A549 (cell line): ENCODE measurements at regions of chr20 and their contacts with region 1.

Region 1: GRCh38 chr20:17845701-17846475 is 122.7 kb downstream of the SNX5 start:
- DNase-seq: no peak
- ATAC-seq: no peak
- H3K4me3 ChIP-seq: no peak overlapping the region
- H3K27ac ChIP-seq: no peak overlapping the region
- H3K4me1 ChIP-seq: no peaks in the 10 kb centered on the region
- CTCF ChIP-seq: no peak
- EP300 ChIP-seq: no peak
- POLR2A ChIP-seq: no peak
- RAD21 ChIP-seq: no peak

Region 2: DNA sequence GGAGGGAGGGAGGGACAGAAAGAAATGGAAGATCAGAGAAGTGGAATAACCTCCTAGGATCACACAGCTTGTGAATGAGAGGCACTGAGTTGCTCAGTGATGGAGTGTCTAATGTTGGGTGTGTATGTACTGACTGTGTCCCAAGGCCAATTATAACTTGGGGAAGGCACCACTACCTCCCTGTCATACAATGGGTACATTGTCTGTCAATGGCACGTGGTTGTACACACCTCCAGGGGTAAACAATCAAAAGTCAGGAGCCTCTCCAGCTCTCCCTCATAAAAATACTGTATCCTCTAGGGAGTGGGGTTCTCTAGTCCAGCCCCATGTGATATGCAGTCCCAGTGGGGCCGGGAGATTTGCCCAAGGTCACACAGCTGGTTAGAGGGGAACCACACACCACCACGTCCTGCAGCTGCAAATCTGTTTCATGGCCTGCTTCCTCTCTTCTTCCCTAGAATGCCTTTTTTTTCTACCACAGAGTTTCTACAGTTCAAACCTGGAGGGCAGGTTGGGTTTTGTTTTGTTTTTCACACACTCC is 10.2 kb after region 1 on chr20:
- CTCF ChIA-PET with region 1: interaction called, 10 read pairs
- POLR2A ChIA-PET with region 1: no interaction called
- DNase-seq: no peak
- ATAC-seq: no peak
- H3K4me3 ChIP-seq: no peak overlapping the region
- H3K27ac ChIP-seq: no peak overlapping the region
- H3K4me1 ChIP-seq: no peaks in the 10 kb centered on the region
- CTCF ChIP-seq: no peak
- EP300 ChIP-seq: no peak
- POLR2A ChIP-seq: no peak
- RAD21 ChIP-seq: no peak

Region 3: DNA sequence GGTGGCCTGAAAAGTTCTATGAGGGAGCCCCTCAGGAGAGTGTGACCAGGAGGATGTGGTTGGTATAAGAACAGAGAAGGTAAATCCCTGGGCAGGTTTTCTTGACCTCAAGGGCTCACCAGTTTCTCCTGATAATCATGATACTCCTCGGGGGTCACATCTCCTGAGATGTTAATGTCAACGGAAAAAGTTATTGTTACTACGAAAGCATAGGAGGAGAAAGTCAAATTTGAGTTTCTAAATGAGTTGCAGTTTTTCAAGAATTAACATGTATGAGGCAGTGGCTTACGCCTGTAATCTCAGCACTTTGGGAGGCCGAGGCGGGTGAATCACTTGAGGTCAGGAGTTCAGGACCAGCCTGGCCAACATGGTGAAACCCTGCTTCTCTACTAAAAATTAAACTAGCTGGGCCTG is 146.3 kb after region 1 on chr20:
- CTCF ChIA-PET with region 1: no interaction called
- POLR2A ChIA-PET with region 1: no interaction called
- DNase-seq: no peak
- ATAC-seq: no peak
- H3K4me3 ChIP-seq: no peak overlapping the region
- H3K27ac ChIP-seq: no peak overlapping the region
- H3K4me1 ChIP-seq: peaks cover 3% of the 10 kb centered on the region; the same call in 1 of the 3 replicates
- CTCF ChIP-seq: no peak
- EP300 ChIP-seq: no peak
- POLR2A ChIP-seq: no peak
- RAD21 ChIP-seq: no peak